CD4-positive, alpha-beta T cell (primary cell): ENCODE measurements at regions of chr1 and their contacts with region 1.

Region 1: GRCh38 chr1:32291708-32292492 is at the start of gene HDAC1:
- DNase-seq: peak; percentile 93 to 98 (median 96)
- ATAC-seq: peak; percentile 91
- H3K4me3 ChIP-seq: peak within 1 kb of the TSS; percentile 98
- H3K4me3 Mint-ChIP-seq: peak within 1 kb of the TSS; percentile 100
- H3K27ac ChIP-seq: peak within 1 kb of the TSS; percentile 81
- H3K27ac Mint-ChIP-seq: peak within 1 kb of the TSS; percentile 92
- H3K4me1 ChIP-seq: peaks cover 67% of the 10 kb centered on the region
- H3K4me1 Mint-ChIP-seq: peaks cover 54% of the 10 kb centered on the region
- H3K27me3 ChIP-seq: no peaks in the 10 kb centered on the region
- H3K27me3 Mint-ChIP-seq: no peaks in the 10 kb centered on the region
- CTCF ChIP-seq: no peak
- total RNA-seq, gene HDAC1: 56.9 to 61.0 TPM

Region 2: GRCh38 chr1:32200226-32201010 is 91.5 kb before region 1 on chr1 and contains the start of gene CCDC28B:
- CTCF ChIA-PET with region 1: interaction called, 3 read pairs
- POLR2A ChIA-PET with region 1: interaction called, 10 read pairs
- intact Hi-C with region 1: loop called in 1 of 2 experiments (anchors 5 kb)
- DNase-seq: peak in 13 of 14 experiments; percentile 15 to 74 (median 46)
- ATAC-seq: peak; percentile 54
- H3K4me3 ChIP-seq: peak within 1 kb of the TSS; percentile 87
- H3K4me3 Mint-ChIP-seq: peak within 1 kb of the TSS; percentile 82
- H3K27ac ChIP-seq: peak within 1 kb of the TSS; percentile 81 to 97
- H3K27ac Mint-ChIP-seq: peak within 1 kb of the TSS; percentile 95
- H3K4me1 ChIP-seq: peaks cover 75% of the 10 kb centered on the region
- H3K4me1 Mint-ChIP-seq: peaks cover 64% of the 10 kb centered on the region
- H3K27me3 ChIP-seq: no peaks in the 10 kb centered on the region
- H3K27me3 Mint-ChIP-seq: no peaks in the 10 kb centered on the region
- CTCF ChIP-seq: no peak
- total RNA-seq, gene CCDC28B: 4.0 to 5.7 TPM

Region 3: GRCh38 chr1:32215629-32216480 is 76.0 kb before region 1 on chr1:
- CTCF ChIA-PET with region 1: interaction called, 12 read pairs
- POLR2A ChIA-PET with region 1: interaction called, 13 read pairs
- intact Hi-C with region 1: loop called in 1 of 2 experiments (anchors 1 kb)
- DNase-seq: peak; percentile 33 to 81 (median 50)
- ATAC-seq: peak; percentile 96
- H3K4me3 ChIP-seq: no peak overlapping the region
- H3K4me3 Mint-ChIP-seq: no peak overlapping the region
- H3K27ac ChIP-seq: no peak overlapping the region
- H3K27ac Mint-ChIP-seq: peak overlapping the region; percentile 62
- H3K4me1 ChIP-seq: peaks cover 16% of the 10 kb centered on the region
- H3K4me1 Mint-ChIP-seq: peaks cover 13% of the 10 kb centered on the region
- H3K27me3 ChIP-seq: no peaks in the 10 kb centered on the region
- H3K27me3 Mint-ChIP-seq: no peaks in the 10 kb centered on the region
- CTCF ChIP-seq: peak; percentile 85

Region 4: DNA sequence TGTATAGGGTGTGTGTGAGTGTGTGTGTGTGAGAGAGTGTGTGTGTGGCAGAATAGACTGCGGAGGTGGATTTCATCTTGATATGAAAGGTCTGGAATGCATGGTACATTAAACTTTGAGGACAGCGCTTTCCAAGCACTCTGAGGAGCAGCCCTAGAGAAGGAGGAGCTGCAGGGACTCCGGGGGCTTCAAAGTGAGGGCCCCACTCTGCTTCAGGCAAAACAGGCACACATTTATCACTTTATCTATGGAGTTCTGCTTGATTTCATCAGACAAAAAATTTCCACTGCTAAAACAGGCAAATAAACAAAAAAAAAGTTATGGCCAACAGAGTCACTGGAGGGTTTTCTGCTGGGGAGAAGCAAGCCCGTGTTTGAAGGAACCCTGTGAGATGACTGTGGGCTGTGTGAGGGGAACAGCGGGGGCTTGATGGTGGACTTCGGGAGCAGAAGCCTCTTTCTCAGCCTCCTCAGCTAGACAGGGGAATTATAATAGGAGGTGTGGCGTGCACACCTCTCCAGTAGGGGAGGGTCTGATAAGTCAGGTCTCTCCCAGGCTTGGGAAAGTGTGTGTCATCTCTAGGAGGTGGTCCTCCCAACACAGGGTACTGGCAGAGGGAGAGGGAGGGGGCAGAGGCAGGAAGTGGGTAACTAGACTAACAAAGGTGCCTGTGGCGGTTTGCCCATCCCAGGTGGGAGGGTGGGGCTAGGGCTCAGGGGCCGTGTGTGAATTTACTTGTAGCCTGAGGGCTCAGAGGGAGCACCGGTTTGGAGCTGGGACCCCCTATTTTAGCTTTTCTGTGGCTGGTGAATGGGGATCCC is 18.3 kb before region 1 on chr1:
- CTCF ChIA-PET with region 1: interaction called, 3 read pairs
- POLR2A ChIA-PET with region 1: interaction called, 16 read pairs
- intact Hi-C with region 1: loop called in 1 of 2 experiments (anchors 2 kb)
- DNase-seq: peak; percentile 51 to 92 (median 84)
- ATAC-seq: peak; percentile 89
- H3K4me3 ChIP-seq: peak overlapping the region; percentile 44
- H3K4me3 Mint-ChIP-seq: peak overlapping the region; percentile 87
- H3K27ac ChIP-seq: peak overlapping the region; percentile 60 to 78
- H3K27ac Mint-ChIP-seq: peak overlapping the region; percentile 93
- H3K4me1 ChIP-seq: peaks cover 76% of the 10 kb centered on the region
- H3K4me1 Mint-ChIP-seq: peaks cover 56% of the 10 kb centered on the region
- H3K27me3 ChIP-seq: no peaks in the 10 kb centered on the region
- H3K27me3 Mint-ChIP-seq: no peaks in the 10 kb centered on the region
- CTCF ChIP-seq: no peak

Region 5: DNA sequence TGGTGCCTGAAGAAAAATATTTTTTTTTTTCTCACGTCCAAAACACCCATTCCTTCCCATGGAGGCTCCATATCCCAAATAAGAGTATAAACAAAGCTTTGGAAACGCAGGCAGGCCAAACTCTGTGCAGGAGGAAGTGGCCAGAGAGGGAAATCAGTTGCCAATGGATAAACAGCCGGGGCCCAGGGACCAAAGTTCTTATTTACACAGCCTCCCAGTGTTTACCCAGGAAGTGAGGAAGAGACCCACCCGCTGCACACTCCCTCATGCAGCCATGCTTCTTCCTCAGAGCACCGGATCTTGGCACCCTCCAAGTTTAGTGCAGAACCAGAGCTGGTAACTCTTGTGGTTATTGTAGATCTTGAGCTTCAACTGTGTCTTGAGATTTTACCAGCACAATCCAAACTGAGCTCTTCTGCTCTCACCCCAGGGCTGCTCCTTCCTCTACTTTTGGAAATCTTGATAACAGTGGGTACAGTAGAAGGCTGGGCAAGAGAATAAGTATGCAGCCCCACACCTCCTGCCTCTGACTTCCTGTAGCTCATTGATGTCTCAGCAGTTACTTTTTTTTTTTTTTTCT is 29.9 kb after region 1 on chr1:
- CTCF ChIA-PET with region 1: no interaction called
- POLR2A ChIA-PET with region 1: interaction called, 31 read pairs
- intact Hi-C with region 1: loop called in 1 of 2 experiments (anchors 1 kb)
- DNase-seq: peak in 10 of 14 experiments; percentile 7 to 70 (median 29)
- ATAC-seq: peak; percentile 87
- H3K4me3 ChIP-seq: peak overlapping the region; percentile 25
- H3K4me3 Mint-ChIP-seq: peak overlapping the region; percentile 62
- H3K27ac ChIP-seq: peak overlapping the region; percentile 12 to 49
- H3K27ac Mint-ChIP-seq: peak overlapping the region; percentile 82
- H3K4me1 ChIP-seq: peaks cover 62% of the 10 kb centered on the region
- H3K4me1 Mint-ChIP-seq: peaks cover 51% of the 10 kb centered on the region
- H3K27me3 ChIP-seq: no peaks in the 10 kb centered on the region
- H3K27me3 Mint-ChIP-seq: no peaks in the 10 kb centered on the region
- CTCF ChIP-seq: no peak

Region 6: DNA sequence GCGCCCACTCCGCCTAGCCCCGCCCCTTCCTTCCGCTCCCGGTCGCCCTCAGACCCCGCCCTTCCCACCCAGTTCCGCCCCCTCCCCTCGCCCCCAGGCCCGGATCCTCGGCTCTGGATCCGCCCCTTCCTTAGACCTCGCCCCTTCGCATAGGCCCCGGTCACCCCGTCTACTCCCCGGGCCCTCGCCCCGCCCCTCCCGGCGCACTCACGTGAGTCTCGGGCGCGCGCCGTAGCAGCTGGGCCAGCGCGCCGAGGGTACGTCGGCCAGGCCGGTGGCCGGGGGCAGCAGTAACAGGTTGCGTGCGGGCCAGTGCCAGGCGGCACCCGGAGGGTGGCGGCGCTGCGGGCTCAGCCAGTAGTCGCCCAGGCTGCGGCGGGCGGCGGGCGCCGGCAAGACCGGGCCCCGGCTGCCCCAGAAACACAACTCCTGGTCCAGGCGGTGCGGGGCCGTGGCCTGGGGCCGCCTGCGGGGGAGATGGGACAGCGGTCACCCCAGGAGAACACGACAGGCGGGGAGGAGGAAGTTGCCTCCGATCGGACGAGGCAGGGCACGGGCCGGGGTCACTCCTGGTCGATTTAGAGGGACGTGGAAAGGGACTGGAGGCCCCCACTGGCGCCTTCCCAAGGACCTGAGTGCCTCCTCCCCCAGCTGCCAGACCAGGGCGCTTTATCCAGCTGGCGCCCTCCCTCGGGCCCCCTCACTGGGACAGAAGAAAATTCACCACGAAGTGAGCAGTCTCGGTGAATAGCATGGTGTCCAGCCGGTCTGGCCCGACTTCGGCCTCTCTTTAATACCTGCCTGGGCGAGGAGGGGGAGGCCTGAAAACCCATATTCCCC is 59.7 kb after region 1 on chr1:
- CTCF ChIA-PET with region 1: interaction called, 6 read pairs
- POLR2A ChIA-PET with region 1: interaction called, 16 read pairs
- intact Hi-C with region 1: loop called in 1 of 2 experiments (anchors 5 kb)
- DNase-seq: peak; percentile 84 to 97 (median 90)
- ATAC-seq: peak; percentile 95
- H3K4me3 ChIP-seq: peak overlapping the region; percentile 66
- H3K4me3 Mint-ChIP-seq: peak overlapping the region; percentile 87
- H3K27ac ChIP-seq: peak overlapping the region; percentile 53 to 78
- H3K27ac Mint-ChIP-seq: peak overlapping the region; percentile 76
- H3K4me1 ChIP-seq: peaks cover 48% of the 10 kb centered on the region
- H3K4me1 Mint-ChIP-seq: peaks cover 51% of the 10 kb centered on the region
- H3K27me3 ChIP-seq: no peaks in the 10 kb centered on the region
- H3K27me3 Mint-ChIP-seq: no peaks in the 10 kb centered on the region
- CTCF ChIP-seq: no peak